Activated naive CD8-positive, alpha-beta T cell treated with anti-CD3 and anti-CD28 coated beads, Interleukin-2, amount 10 ng/mL, durations not matched to agents 7 days and 5 days (primary cell): ENCODE measurements at regions of chr2 and their contacts with region 1.

Region 1: GRCh38 chr2:218898109-218898878 is 17.6 kb downstream of the WNT10A start:
- DNase-seq: peak; percentile 87
- ATAC-seq: peak; percentile 39
- H3K4me3 Mint-ChIP-seq: peak overlapping the region; percentile 74
- H3K27ac Mint-ChIP-seq: peak overlapping the region; percentile 50
- H3K4me1 Mint-ChIP-seq: peaks cover 33% of the 10 kb centered on the region
- H3K27me3 Mint-ChIP-seq: peaks cover 70% of the 10 kb centered on the region

Region 2: GRCh38 chr2:218839430-218839829 is 58.9 kb before region 1 on chr2:
- POLR2A ChIA-PET with region 1: no interaction called
- DNase-seq: no peak
- ATAC-seq: no peak
- H3K4me3 Mint-ChIP-seq: no peak overlapping the region
- H3K27ac Mint-ChIP-seq: no peak overlapping the region
- H3K4me1 Mint-ChIP-seq: no peaks in the 10 kb centered on the region
- H3K27me3 Mint-ChIP-seq: peaks cover 22% of the 10 kb centered on the region

Region 3: DNA sequence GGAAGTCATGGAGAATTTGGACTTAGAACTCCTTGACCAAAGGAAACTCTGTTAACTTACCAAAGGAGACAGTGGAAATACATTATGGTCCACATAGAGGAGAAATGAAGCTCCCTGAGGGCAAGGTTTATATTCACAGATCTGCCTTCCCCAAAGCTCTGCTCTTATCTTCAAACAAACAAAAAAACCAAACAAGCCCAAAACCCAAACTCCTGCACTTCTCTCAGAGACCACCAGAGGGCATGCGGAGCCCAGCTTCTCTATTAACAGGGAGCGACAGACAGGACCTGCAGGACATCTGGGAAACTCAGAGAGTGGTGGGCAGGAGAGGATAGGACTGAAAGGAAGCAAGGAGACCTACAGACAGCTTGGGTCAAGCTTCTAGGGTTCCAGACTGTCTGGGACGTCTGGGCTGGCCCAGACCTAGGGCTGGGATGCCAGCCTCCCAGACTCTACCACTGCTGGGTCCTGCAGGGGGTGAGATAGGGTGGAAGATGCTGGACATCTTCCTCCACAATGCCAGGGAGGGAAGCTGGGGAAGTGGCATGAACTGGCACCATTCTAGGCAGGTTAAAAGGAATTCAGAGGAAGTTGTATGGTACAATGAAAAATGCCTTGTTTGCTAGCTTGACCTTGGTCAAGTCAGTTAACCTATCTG is 21.6 kb before region 1 on chr2:
- POLR2A ChIA-PET with region 1: interaction called, 53 read pairs
- DNase-seq: peak; percentile 63
- ATAC-seq: peak; percentile 15
- H3K4me3 Mint-ChIP-seq: no peak overlapping the region
- H3K27ac Mint-ChIP-seq: no peak overlapping the region
- H3K4me1 Mint-ChIP-seq: peaks cover 22% of the 10 kb centered on the region
- H3K27me3 Mint-ChIP-seq: peaks cover 61% of the 10 kb centered on the region

Region 4: GRCh38 chr2:218908721-218909619 is 10.7 kb after region 1 on chr2:
- POLR2A ChIA-PET with region 1: interaction called, 11 read pairs
- DNase-seq: peak; percentile 92
- ATAC-seq: peak; percentile 96
- H3K4me3 Mint-ChIP-seq: peak overlapping the region; percentile 85
- H3K27ac Mint-ChIP-seq: peak overlapping the region; percentile 83
- H3K4me1 Mint-ChIP-seq: peaks cover 14% of the 10 kb centered on the region
- H3K27me3 Mint-ChIP-seq: peaks cover 20% of the 10 kb centered on the region